Activated naive CD4-positive, alpha-beta T cell treated with anti-CD3 and anti-CD28 coated beads, Interleukin-2, amount 10 ng/mL, durations not matched to agents 7 days and 5 days (primary cell): ENCODE measurements at regions of chr13 and their contacts with region 1.

Region 1: DNA sequence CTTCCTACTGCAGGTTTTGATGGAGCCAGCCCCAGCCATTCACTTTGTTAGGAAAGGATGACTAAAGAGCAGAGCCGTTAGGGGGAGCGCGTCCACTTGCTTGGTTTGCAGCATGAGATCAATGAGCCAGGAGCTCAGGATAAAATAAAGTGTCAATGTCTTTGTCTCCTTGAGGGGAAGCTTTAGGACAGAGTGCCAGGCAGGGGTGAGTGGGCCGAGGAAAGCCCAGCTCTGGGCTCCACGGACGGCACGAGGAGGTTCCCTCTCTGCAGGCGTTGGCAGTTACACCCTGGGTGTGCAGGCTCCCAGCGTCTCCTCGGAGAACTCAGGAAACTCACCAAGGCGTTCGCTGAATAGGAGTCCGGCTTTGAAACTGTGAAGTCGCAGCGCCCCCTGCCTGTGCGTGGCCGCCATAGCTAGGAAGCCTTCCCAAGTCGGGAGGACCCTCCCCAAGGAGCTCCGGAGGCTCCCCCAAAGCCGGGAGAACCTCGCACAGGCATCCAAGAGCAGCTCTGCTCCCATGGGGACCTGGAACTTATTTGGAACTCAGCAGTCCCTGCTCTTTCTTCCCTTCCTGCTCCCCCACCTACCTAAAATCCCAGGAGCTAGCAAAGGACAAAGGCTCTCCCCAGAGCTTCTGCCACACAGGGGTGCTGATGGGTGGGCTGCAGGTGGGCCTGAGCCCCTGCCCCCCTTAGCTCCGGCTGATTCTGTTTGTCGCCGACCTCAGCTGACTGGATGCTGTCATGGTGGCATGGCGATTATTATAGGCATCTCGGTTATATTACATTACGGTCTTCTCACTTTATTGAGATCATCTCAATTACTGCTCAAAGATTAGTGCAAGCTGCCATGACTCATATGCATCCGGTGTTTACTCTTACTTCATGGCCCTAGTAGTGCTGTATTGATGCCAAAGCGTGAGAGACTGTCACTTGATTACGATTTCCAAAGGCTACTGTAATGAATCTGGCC is 34.4 kb downstream of the GSX1 start:
- DNase-seq: peak; percentile 77
- H3K4me3 Mint-ChIP-seq: no peak overlapping the region
- H3K27ac Mint-ChIP-seq: no peak overlapping the region
- H3K4me1 Mint-ChIP-seq: peaks cover 4% of the 10 kb centered on the region
- H3K27me3 Mint-ChIP-seq: peaks cover 78% of the 10 kb centered on the region

Region 2: GRCh38 chr13:27374650-27375049 is 452.0 kb before region 1 on chr13:
- CTCF ChIA-PET with region 1: interaction called, 165 read pairs
- DNase-seq: peak; percentile 68
- H3K4me3 Mint-ChIP-seq: no peak overlapping the region
- H3K27ac Mint-ChIP-seq: no peak overlapping the region
- H3K4me1 Mint-ChIP-seq: peaks cover 7% of the 10 kb centered on the region
- H3K27me3 Mint-ChIP-seq: peaks cover 37% of the 10 kb centered on the region

Region 3: DNA sequence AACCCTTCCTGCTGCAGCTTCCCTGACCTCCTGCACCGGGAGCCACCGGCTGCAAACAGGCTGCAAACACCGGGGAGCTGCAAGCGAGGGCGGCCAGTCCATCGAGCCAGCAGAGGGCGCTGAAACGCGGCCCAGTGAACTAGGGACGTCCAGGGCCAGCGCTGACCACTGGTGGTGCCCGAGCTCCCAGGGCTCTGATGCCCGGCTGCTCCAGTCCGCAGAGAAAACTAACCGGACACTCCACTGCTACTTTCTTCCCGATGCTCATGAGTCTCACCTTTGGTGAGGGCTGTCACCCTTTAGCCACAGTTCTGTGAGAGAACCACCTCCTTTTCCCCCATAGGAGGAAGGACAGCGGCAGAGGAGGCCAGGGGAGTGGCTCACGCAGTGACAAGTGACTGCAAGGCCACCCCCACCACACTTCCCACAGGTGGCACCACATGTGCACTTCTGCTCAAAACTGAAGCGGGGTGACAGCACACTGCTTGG is 293.5 kb before region 1 on chr13:
- CTCF ChIA-PET with region 1: interaction called, 29 read pairs
- DNase-seq: peak; percentile 60
- H3K4me3 Mint-ChIP-seq: no peak overlapping the region
- H3K27ac Mint-ChIP-seq: no peak overlapping the region
- H3K4me1 Mint-ChIP-seq: peaks cover 4% of the 10 kb centered on the region
- H3K27me3 Mint-ChIP-seq: peaks cover 5% of the 10 kb centered on the region

Region 4: GRCh38 chr13:27789495-27790303 is 37.0 kb before region 1 on chr13:
- CTCF ChIA-PET with region 1: interaction called, 14 read pairs
- DNase-seq: no peak
- H3K4me3 Mint-ChIP-seq: peak overlapping the region; percentile 59
- H3K27ac Mint-ChIP-seq: peak overlapping the region; percentile 71
- H3K4me1 Mint-ChIP-seq: peaks cover 35% of the 10 kb centered on the region
- H3K27me3 Mint-ChIP-seq: peaks cover 93% of the 10 kb centered on the region

Region 5: GRCh38 chr13:27810461-27810860 is 16.2 kb before region 1 on chr13:
- CTCF ChIA-PET with region 1: interaction called, 49 read pairs
- DNase-seq: no peak
- H3K4me3 Mint-ChIP-seq: no peak overlapping the region
- H3K27ac Mint-ChIP-seq: no peak overlapping the region
- H3K4me1 Mint-ChIP-seq: no peaks in the 10 kb centered on the region
- H3K27me3 Mint-ChIP-seq: peaks cover 61% of the 10 kb centered on the region

Region 6: DNA sequence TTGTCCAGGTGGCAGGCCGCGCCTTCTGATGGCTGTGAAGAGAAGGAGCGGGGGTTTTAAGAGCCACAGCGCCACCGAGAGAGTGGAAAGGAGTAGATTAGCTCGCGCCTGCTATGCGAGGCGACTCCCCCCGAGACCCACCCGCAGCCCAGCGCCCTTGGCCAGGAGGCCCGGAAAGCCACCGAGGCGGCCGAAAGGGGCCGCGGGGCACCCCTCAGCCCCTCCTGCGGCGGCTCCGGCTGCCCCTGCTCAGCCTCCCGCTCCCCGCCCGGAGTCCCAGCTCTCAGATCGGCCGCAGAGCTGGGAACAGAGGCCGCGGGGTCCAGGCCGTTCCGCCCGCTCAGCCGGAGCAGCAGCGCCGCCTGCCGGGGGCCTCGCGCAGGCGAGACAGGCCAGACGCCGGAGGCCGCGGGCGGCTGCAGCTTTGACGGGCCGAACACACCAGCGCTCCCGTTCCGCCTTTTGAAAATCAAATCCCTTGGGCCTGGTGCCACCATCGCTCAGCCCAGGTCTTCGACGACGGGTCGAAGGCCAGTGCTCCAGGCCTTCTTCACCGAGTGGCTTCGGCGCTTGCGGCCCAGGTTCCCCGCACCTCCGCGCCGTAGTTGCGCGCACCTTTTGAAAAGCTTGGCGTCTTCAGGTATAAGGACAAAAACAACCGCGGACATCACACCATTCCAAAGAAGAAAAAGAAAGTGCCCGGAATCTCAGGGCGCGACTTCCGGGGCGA is 127.2 kb after region 1 on chr13:
- CTCF ChIA-PET with region 1: interaction called, 41 read pairs
- DNase-seq: peak; percentile 69
- H3K4me3 Mint-ChIP-seq: peak overlapping the region; percentile 60
- H3K27ac Mint-ChIP-seq: peak overlapping the region; percentile 67
- H3K4me1 Mint-ChIP-seq: peaks cover 13% of the 10 kb centered on the region
- H3K27me3 Mint-ChIP-seq: peaks cover 77% of the 10 kb centered on the region